ENCODE measurements at regions of chr7 and their contacts with region 1.

Region 1: DNA sequence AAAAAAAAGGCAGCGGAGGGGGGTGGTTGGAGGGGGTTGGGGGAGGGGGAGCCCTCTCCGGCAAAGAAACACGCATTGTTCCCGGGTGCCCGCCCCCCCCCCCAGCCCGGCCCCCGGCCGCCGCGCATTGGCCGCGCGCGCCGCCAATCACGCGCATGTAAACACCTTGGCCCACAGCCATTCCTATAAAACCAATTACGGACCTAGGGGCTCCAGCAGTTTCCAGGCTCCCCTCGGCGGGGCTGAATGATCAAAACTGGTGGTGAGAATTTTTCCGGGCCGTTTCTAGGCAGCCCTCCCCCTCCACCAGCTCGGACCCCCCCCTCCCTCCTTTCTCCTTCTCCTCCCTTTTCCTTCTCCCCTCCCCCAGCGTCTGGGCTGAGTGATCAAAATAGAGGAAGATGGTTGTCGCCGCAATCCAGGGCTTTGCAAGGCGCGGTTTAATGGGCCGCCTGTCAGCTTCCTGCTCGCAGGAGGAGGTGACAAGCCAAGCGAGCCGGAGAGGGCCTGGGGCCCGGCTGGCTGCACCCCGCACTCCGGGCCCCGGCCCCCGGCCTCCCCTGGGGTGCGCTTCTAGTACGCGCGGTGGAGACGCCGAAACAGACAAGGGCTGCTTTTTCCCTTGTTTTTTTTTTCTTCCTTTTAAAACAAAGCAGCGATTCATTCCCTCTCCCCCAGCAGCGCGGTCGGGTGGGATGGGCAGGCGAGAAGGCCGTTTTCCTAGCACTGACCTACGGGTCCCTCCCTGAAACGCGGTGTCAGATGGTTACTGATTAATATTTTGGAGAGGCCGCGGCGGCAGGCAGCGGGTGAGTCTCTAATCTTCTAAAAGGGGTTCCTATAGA is 432 bp upstream of the TNRC18 start:
- DNase-seq: peak; percentile 40
- ATAC-seq: peak; percentile 58
- H3K4me3 Mint-ChIP-seq: peak overlapping the region; percentile 83
- H3K27ac Mint-ChIP-seq: peak overlapping the region; percentile 65
- H3K4me1 Mint-ChIP-seq: peaks cover 61% of the 10 kb centered on the region
- H3K27me3 Mint-ChIP-seq: peaks cover 25% of the 10 kb centered on the region
- CTCF ChIP-seq: no peak

Region 2: GRCh38 chr7:5363729-5364128 is 60.3 kb before region 1 on chr7:
- CTCF ChIA-PET with region 1: no interaction called
- POLR2A ChIA-PET with region 1: no interaction called
- intact Hi-C with region 1: loop called (anchors 2 kb)
- DNase-seq: no peak
- ATAC-seq: no peak
- H3K4me3 Mint-ChIP-seq: no peak overlapping the region
- H3K27ac Mint-ChIP-seq: no peak overlapping the region
- H3K4me1 Mint-ChIP-seq: peaks cover 22% of the 10 kb centered on the region
- H3K27me3 Mint-ChIP-seq: no peaks in the 10 kb centered on the region
- CTCF ChIP-seq: no peak

Region 3: DNA sequence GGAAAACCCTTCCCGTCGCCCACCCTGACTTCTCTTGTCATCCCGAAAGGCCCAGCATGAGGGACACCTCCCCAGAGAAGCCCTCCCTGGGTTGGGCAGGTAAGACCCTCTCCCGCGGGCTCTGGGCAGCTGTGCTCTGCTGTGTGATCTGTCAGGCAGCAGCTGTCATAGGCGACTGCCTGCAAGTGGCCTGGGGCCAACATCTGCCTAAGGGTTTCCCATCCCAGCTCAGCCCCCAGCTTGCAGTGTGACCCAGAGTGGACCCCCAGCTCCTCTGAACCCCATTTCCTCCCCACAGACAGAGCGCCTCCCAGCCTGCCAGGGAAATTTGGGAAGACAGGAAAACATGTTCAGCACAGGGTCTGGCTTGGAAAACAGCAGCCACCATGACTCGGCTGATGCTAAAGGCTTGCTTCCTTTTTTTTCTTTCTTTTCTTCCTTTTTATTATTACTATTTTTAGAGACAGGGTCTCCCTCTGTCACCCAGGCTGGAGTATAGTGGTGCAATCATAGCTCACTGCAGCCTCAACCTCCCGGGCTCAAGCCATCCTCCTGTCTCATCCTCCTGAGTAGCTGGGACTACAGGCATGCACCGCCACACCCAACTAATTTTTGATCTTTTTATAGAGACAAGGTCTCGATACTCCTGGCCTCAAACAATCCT is 17.9 kb after region 1 on chr7:
- CTCF ChIA-PET with region 1: no interaction called
- POLR2A ChIA-PET with region 1: interaction called, 11 read pairs
- intact Hi-C with region 1: no loop called
- DNase-seq: no peak
- ATAC-seq: no peak
- H3K4me3 Mint-ChIP-seq: no peak overlapping the region
- H3K27ac Mint-ChIP-seq: no peak overlapping the region
- H3K4me1 Mint-ChIP-seq: no peaks in the 10 kb centered on the region
- H3K27me3 Mint-ChIP-seq: no peaks in the 10 kb centered on the region
- CTCF ChIP-seq: no peak

Region 4: DNA sequence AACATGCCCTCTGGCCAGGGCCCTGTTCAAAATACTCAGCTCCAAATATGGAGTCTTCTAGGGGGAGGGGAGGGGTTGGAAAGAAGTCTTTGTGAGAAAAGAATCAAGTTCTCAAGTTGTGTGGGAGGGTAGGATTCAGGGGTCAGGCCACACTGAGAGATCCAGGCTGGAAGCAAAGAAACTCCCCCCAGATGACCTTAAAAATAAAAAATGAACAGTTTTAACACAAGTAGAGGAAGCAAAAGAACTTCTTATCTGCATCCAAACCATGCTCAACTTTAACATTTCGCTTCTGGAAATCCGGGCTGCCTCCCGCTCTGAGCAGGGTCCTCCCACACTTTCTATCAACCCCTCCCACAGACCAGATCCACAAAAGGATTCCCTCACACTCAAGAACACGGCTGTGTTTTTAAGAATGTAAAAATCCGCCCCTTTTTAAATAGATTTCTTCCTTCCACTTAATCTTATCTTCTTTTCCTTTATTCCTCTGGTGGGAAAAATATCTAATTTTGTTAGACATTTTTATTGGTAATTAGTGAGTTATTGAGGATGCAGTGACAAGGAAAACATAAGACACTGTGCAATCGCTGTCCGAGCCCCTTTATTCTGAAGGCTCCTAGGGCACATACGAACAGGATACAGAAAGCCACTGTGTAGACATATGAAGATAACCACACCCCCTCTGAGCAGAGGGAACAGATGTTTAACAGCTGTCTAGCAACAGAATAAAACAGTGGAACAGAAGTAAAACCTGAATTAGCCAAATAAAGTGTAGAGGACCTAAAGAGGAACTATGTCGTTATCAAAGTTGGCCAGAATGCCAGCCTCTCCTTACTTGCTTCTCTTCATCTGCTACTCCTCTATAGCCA is 804.5 kb after region 1 on chr7:
- CTCF ChIA-PET with region 1: no interaction called
- POLR2A ChIA-PET with region 1: no interaction called
- intact Hi-C with region 1: no loop called
- DNase-seq: no peak
- ATAC-seq: peak; percentile 83
- H3K4me3 Mint-ChIP-seq: peak overlapping the region; percentile 16
- H3K27ac Mint-ChIP-seq: peak overlapping the region; percentile 11
- H3K4me1 Mint-ChIP-seq: peaks cover 32% of the 10 kb centered on the region
- H3K27me3 Mint-ChIP-seq: peaks cover 5% of the 10 kb centered on the region
- CTCF ChIP-seq: no peak